PC-9 (cell line): ENCODE measurements at regions of chr2 and their contacts with region 1.

Region 1: GRCh38 chr2:54728669-54729120 is 5.2 kb downstream of the EML6 start:
- DNase-seq: peak; percentile 60 to 75
- H3K4me3 ChIP-seq: no peak overlapping the region
- H3K27ac ChIP-seq: peak overlapping the region; percentile 11
- H3K4me1 ChIP-seq: peaks cover 37% of the 10 kb centered on the region
- H3K27me3 ChIP-seq: no peaks in the 10 kb centered on the region
- CTCF ChIP-seq: no peak; the same call in 1 of the 2 replicates

Region 2: GRCh38 chr2:54680397-54681041 is 48.2 kb before region 1 on chr2:
- CTCF ChIA-PET with region 1: interaction called, 10 read pairs
- POLR2A ChIA-PET with region 1: no interaction called
- intact Hi-C with region 1: no loop called
- DNase-seq: no peak
- H3K4me3 ChIP-seq: no peak overlapping the region
- H3K27ac ChIP-seq: no peak overlapping the region
- H3K4me1 ChIP-seq: no peaks in the 10 kb centered on the region
- H3K27me3 ChIP-seq: no peaks in the 10 kb centered on the region
- CTCF ChIP-seq: no peak

Region 3: DNA sequence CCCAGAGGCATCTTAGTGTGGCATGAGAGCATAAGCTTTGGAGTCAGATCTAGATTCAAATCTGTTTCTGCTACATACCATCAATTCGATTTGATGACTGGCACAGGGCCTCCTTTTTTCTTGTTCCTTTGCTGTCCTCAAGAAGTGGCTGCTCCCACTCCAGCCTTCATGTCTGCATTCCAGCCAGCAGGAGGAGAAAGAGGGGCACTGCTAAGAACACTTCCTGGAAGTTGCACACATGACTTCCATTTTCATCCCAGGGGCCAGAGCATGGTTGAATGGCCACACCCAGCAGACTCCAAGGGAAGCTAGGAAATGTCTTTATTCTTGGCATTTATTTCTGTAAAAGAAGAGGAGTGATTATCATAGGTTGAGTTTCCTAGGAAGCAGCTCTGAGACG is 45.1 kb after region 1 on chr2:
- CTCF ChIA-PET with region 1: no interaction called
- POLR2A ChIA-PET with region 1: no interaction called
- intact Hi-C with region 1: no loop called
- DNase-seq: no peak
- H3K4me3 ChIP-seq: no peak overlapping the region
- H3K27ac ChIP-seq: no peak overlapping the region
- H3K4me1 ChIP-seq: peaks cover 29% of the 10 kb centered on the region
- H3K27me3 ChIP-seq: no peaks in the 10 kb centered on the region
- CTCF ChIP-seq: 0 out of 2 replicates have a peak, but pooled peaks have one; percentile 36